ENCODE measurements at regions of chr10 and their contacts with region 1.

Region 1: GRCh38 chr10:99983280-99983988 is 26.3 kb downstream of the DNMBP start:
- DNase-seq: peak; percentile 27
- H3K4me3 ChIP-seq: peak overlapping the region; percentile 48
- H3K27ac ChIP-seq: peak overlapping the region; percentile 18
- H3K4me1 ChIP-seq: peaks cover 53% of the 10 kb centered on the region
- CTCF ChIP-seq: no peak

Region 2: DNA sequence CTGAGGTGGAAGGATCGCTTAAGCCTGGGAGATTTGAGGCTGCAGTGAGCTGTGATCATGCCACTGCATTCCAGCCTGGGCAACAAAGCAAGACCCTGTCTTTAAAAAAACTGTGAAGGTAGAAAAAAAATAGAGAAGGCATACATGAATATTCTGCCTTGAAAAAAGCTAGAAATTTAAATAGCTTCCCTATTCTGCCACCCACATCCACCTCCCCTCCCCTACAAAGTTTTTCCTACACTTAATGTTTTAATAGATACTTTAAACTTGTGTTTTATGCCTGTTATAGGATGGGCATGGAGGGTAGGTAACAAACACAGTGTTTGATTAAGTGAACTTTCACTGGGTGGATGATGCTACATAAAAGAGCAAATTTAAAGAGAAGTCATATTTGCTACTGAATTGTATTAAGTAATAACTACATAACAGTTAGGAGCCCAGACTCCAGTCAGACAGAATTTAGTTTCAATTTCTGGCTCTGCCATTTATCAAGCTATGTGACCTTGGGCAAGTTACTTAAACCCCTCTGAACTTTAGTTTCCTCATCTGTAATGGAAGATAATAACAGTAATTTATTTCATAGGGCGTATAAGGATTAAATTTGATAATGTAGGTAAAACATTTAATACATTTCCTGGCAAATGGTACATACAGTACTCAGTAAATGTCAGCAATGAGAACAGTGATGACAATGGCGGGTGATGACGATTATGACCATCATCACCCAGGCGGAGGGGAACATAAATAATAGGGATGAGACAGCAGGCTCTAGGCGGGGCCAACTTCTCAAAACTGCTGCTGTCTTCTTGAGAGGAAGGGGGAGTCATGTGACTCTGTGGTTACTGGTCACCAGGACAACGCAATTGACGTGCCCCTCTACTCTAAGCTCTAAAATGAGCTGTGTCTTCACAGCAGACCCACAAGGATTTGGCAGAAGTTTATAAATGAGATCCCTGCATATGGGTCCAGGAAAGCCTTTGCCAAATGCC is 10.6 kb after region 1 on chr10:
- CTCF ChIA-PET with region 1: no interaction called
- POLR2A ChIA-PET with region 1: interaction called, 24 read pairs
- intact Hi-C with region 1: no loop called
- DNase-seq: peak; percentile 66
- H3K4me3 ChIP-seq: peak overlapping the region; percentile 12
- H3K27ac ChIP-seq: no peak overlapping the region
- H3K4me1 ChIP-seq: peaks cover 33% of the 10 kb centered on the region
- CTCF ChIP-seq: no peak

Region 3: GRCh38 chr10:99999319-100000108 is 16.1 kb after region 1 on chr10:
- CTCF ChIA-PET with region 1: no interaction called
- POLR2A ChIA-PET with region 1: interaction called, 24 read pairs
- intact Hi-C with region 1: no loop called
- DNase-seq: no peak
- H3K4me3 ChIP-seq: no peak overlapping the region
- H3K27ac ChIP-seq: no peak overlapping the region
- H3K4me1 ChIP-seq: peaks cover 49% of the 10 kb centered on the region
- CTCF ChIP-seq: no peak

Measured in OCI-LY7 (cell line).